ENCODE measurements at regions of chr10 and their contacts with region 1.

Region 1: DNA sequence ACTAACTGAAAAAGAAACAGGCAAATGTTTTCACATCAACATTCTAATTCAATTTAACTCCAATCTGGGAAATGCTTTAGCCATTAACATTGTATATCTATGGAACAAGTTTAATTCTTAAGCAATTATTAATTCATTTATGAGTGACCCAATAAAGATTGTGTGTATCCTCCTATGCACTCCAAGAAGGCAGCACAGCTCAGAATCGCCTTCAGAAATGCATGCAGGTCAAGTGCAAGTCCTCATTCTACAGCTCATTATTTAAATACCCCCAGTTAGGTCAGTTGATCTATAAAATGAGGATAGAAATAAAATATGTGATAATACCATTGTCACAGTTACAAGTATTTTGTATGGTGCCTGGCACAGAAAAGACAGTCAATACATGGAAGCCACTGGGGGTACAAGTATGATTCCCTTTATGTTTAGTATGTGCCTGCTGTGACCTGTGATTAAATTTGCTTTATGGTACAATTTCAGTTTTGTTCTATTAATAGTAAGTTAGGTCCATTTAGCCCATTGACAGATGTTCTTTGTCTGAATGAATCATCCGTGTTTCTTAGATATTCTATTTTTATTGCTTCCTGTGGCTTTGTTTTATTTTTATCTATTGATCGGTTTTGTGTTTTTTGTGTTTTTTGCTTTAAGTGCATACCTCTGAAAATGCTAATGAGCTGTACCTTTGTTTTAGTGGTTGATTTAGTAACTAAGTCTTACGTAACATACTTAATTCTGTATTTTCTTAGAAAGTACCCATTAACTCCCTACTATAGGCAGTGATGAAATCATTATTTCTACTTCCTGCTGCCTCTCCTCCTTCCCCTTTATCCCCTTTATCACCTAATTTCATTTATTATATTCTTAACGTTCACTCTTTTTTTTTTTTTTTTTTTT is 42.8 kb downstream of the CPXM2 start:
- DNase-seq: no peak
- ATAC-seq: no peak
- H3K4me3 ChIP-seq: no peak overlapping the region
- H3K27ac ChIP-seq: no peak overlapping the region
- H3K4me1 ChIP-seq: 0 out of 4 replicates have a peak, but pooled peaks cover 0 to 3% of the 10 kb centered on the region in 2 experiments
- H3K27me3 ChIP-seq: peaks cover 77% of the 10 kb centered on the region
- CTCF ChIP-seq: no peak
- POLR2A ChIP-seq: no peak
- RAD21 ChIP-seq: no peak

Region 2: GRCh38 chr10:123715546-123715945 is 133.3 kb before region 1 on chr10:
- CTCF ChIA-PET with region 1: no interaction called
- POLR2A ChIA-PET with region 1: no interaction called
- RAD21 ChIA-PET with region 1: no interaction called
- intact Hi-C with region 1: no loop called
- DNase-seq: no peak
- ATAC-seq: no peak
- H3K4me3 ChIP-seq: no peak overlapping the region
- H3K27ac ChIP-seq: no peak overlapping the region
- H3K4me1 ChIP-seq: no peaks in the 10 kb centered on the region
- H3K27me3 ChIP-seq: peaks cover 83% of the 10 kb centered on the region
- CTCF ChIP-seq: no peak
- POLR2A ChIP-seq: no peak
- RAD21 ChIP-seq: no peak

Region 3: DNA sequence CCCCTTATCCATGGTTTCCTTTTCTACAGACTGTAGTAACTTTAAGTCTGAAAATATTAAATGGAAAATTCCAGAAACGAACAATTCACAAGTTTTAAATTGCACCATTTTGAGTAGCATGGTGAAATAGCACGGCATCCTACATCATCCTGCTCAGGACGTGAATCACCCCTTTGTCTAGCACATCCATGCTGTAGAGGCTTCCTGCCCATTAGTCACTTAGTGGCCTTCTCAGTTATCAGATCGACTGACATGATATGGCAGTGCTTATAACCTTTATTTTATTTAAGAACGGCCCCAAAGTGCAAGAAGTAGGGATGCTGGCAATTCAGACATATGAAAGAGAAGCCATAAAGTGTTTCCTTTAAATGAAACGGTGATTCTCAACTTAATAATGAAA is 39.9 kb before region 1 on chr10:
- CTCF ChIA-PET with region 1: no interaction called
- POLR2A ChIA-PET with region 1: no interaction called
- RAD21 ChIA-PET with region 1: no interaction called
- intact Hi-C with region 1: loop called (anchors 2 kb)
- DNase-seq: peak; percentile 21
- ATAC-seq: peak; percentile 50
- H3K4me3 ChIP-seq: no peak overlapping the region
- H3K27ac ChIP-seq: no peak overlapping the region
- H3K4me1 ChIP-seq: no peaks in the 10 kb centered on the region
- H3K27me3 ChIP-seq: peaks cover 68% of the 10 kb centered on the region
- CTCF ChIP-seq: no peak
- POLR2A ChIP-seq: no peak
- RAD21 ChIP-seq: no peak

Region 4: GRCh38 chr10:123913688-123914268 is 65.0 kb after region 1 on chr10:
- CTCF ChIA-PET with region 1: no interaction called
- POLR2A ChIA-PET with region 1: no interaction called
- RAD21 ChIA-PET with region 1: no interaction called
- intact Hi-C with region 1: no loop called
- DNase-seq: no peak
- ATAC-seq: no peak
- H3K4me3 ChIP-seq: no peak overlapping the region
- H3K27ac ChIP-seq: no peak overlapping the region
- H3K4me1 ChIP-seq: peaks cover 3 to 4% of the 10 kb centered on the region in 2 experiments; a peak in 2 of 4 replicates
- H3K27me3 ChIP-seq: peaks cover 86% of the 10 kb centered on the region
- CTCF ChIP-seq: no peak
- POLR2A ChIP-seq: no peak
- RAD21 ChIP-seq: no peak